A549 (cell line): ENCODE measurements at regions of chr18 and their contacts with region 1.

Region 1: DNA sequence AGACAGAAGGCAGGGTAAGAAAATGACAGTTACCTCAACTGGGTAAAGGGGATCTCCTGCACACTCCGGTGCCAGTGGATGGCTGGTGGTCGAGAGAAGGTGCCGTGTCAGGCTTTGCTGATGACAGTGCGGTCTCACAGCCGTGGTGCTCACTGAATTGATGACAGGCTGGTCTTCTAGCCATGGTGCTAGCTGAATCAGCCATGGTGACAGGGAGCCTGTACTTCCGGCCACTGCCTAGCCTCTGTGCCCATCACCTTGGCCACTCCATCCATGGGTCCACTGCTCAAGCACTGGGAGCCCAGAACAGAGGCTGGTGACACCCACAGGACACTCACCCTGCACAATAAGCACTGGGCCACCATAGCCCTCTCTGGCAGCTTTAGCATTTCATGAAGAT is 315.9 kb downstream of the FBXO15 start:
- DNase-seq: no peak
- ATAC-seq: no peak
- H3K4me3 ChIP-seq: no peak overlapping the region
- H3K27ac ChIP-seq: no peak overlapping the region
- H3K4me1 ChIP-seq: no peaks in the 10 kb centered on the region
- CTCF ChIP-seq: no peak
- EP300 ChIP-seq: no peak
- POLR2A ChIP-seq: no peak
- RAD21 ChIP-seq: no peak

Region 2: GRCh38 chr18:73741946-73742345 is 89.7 kb before region 1 on chr18:
- CTCF ChIA-PET with region 1: no interaction called
- POLR2A ChIA-PET with region 1: no interaction called
- DNase-seq: no peak
- ATAC-seq: no peak
- H3K4me3 ChIP-seq: no peak overlapping the region
- H3K27ac ChIP-seq: no peak overlapping the region
- H3K4me1 ChIP-seq: no peaks in the 10 kb centered on the region
- CTCF ChIP-seq: no peak
- EP300 ChIP-seq: no peak
- POLR2A ChIP-seq: no peak
- RAD21 ChIP-seq: no peak

Region 3: DNA sequence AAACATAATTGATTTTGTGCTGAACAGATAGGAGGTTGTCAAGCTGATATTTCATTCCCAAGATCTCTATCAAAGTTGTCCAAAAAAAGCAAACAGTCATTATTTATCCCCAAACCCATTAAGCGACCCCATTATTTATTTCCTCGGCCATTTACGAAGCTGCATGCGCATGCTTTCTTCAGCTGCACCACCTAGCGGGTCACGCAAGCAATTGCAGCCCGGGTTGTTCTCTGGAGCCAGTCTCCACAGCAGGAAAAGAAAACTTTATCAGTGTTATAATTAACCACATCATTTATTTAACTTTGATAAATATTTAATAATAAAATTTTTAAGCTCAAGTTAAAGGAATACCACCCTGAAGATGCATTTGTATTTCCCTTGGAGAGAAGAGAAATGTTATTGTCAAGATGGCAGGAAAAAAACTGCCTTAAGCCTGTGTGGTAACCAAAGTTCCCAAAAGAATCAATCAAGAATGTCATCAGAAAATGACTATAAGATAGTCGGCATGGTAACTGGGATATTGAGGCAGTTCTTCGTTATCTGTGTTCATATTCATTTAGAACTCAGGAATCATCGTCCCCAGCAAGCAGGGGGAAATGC is 11.2 kb after region 1 on chr18:
- CTCF ChIA-PET with region 1: interaction called, 10 read pairs
- POLR2A ChIA-PET with region 1: no interaction called
- DNase-seq: peak; percentile 19 to 40
- ATAC-seq: peak in 1 of 2 experiments; percentile 72; a peak in 3 of 6 replicates
- H3K4me3 ChIP-seq: no peak overlapping the region; the same call in 2 of the 3 replicates
- H3K27ac ChIP-seq: no peak overlapping the region
- H3K4me1 ChIP-seq: no peaks in the 10 kb centered on the region
- CTCF ChIP-seq: peak; percentile 64
- EP300 ChIP-seq: no peak
- POLR2A ChIP-seq: no peak
- RAD21 ChIP-seq: peak; percentile 71 to 76